Ovary (tissue), 10 donors: ENCODE measurements at regions of chr14 and their contacts with region 1.

Region 1: DNA sequence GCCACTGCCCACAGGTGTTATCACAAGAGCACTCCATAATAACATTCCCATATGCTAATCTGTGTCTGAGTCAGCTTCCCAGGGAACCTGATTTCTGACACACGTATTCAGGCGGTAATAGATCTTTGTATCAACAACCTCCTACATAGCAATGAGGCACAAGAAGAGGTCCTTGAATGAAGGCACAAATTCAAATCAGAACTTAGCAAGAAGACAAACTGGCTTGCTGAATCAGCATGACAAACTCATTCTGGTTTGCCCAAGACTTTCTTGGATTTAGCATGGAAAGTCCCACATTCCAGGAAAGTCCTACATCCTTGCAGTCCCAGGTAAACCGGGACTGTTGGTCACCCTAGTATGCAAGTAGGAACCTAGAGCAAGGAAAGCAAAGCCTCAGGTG is 33.9 kb upstream of the RNU6-7 start:
- DNase-seq: no peak
- H3K4me3 ChIP-seq: no peak overlapping the region
- H3K27ac ChIP-seq: no peak overlapping the region
- H3K4me1 ChIP-seq: no peaks in the 10 kb centered on the region
- H3K27me3 ChIP-seq: no peaks in the 10 kb centered on the region
- CTCF ChIP-seq: no peak
- EP300 ChIP-seq: no peak
- POLR2A ChIP-seq: no peak

Region 2: DNA sequence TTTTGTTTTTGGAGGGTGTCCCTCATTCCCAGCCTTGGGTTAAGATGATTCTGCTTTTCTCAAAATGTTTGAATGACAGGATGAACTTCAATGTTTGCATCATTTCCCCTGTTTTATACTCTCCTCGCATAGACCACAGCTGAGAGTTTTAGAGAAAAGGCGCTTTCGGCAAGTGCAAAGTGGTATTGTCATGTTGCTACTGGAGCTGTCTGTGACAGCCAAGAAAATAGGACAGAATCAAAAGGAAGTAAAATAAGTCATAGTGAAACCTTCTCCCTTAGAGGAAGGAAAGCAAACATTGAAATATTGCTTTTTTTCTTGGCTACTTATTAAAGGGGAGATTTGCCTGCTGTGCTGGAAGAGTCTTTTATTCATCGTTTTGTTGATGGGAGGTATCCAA is 124.3 kb before region 1 on chr14:
- intact Hi-C with region 1: no loop called
- DNase-seq: no peak
- H3K4me3 ChIP-seq: no peak overlapping the region
- H3K27ac ChIP-seq: no peak overlapping the region
- H3K4me1 ChIP-seq: no peaks in the 10 kb centered on the region
- H3K27me3 ChIP-seq: no peaks in the 10 kb centered on the region
- CTCF ChIP-seq: no peak
- EP300 ChIP-seq: no peak
- POLR2A ChIP-seq: no peak

Region 3: GRCh38 chr14:32142341-32142740 is 25.6 kb before region 1 on chr14:
- intact Hi-C with region 1: loop called in 1 of 4 experiments (anchors 2 kb)
- DNase-seq: no peak
- H3K4me3 ChIP-seq: no peak overlapping the region
- H3K27ac ChIP-seq: no peak overlapping the region
- H3K4me1 ChIP-seq: no peaks in the 10 kb centered on the region
- H3K27me3 ChIP-seq: no peaks in the 10 kb centered on the region
- CTCF ChIP-seq: no peak
- EP300 ChIP-seq: no peak
- POLR2A ChIP-seq: no peak

Region 4: DNA sequence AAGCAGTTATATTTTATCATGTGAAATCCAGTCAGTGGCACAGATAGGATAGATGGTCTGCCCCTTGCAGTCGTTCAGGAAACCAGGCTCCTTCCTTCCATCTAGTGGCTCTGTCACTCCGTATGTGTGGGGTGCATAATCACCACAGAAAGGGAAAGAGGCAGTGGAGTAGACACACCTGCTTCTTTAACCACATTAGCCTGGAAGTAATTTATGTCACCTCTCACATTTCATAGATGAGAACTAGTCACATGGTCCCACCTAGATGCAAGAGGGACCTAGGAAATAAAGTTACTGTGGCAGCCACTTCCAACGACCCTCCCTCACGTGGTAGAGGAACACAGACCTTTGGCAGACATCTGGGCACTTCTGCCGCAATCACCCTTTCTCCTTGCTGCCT is 49.4 kb after region 1 on chr14:
- intact Hi-C with region 1: no loop called
- DNase-seq: no peak
- H3K4me3 ChIP-seq: no peak overlapping the region
- H3K27ac ChIP-seq: no peak overlapping the region
- H3K4me1 ChIP-seq: no peaks in the 10 kb centered on the region
- H3K27me3 ChIP-seq: no peaks in the 10 kb centered on the region
- CTCF ChIP-seq: no peak
- EP300 ChIP-seq: no peak
- POLR2A ChIP-seq: no peak